Heart left ventricle (tissue), 16 donors: ENCODE measurements at regions of chr22 and their contacts with region 1.

Region 1: DNA sequence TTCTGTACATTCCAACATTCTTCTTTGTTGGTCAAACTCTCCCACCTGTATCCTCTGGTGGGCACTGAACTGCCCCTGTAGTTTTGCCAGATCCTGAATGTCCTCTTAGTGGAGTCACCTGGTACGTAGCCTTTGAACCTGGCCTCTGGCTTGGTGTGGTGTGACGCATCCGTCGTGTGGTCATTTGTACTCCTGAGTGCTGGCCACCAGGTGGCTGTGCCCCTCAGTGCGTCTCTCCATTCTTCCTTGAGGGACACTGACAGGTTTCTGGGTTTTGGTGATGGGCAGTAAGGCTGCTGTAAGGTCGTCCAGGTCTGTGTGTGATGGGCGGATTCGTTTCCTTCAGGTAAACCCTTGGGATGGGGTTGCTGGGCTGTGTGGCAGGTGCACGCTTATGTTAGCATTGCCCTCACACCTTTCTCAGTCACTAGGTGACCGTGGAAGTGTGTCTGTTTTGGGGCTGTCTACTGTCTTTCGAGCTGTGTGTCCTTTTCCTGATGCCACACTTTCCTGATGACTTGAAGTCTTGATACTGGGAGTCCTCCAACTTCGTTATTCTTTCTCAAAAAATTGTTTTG is 13.6 kb upstream of the RANBP1 start:
- DNase-seq: peak in 2 of 5 donors; percentile 4 to 25
- ATAC-seq: no peak
- H3K4me3 ChIP-seq: no peak overlapping the region
- H3K27ac ChIP-seq: no peak overlapping the region
- H3K4me1 ChIP-seq: no peaks in the 10 kb centered on the region
- H3K27me3 ChIP-seq: no peaks in the 10 kb centered on the region
- CTCF ChIP-seq: no peak
- POLR2A ChIP-seq: no peak

Region 2: GRCh38 chr22:19970479-19971275 is 131.6 kb before region 1 on chr22:
- intact Hi-C with region 1: loop called in 1 of 10 experiments (anchors 10 kb)
- DNase-seq: peak; percentile 56 to 89 (median 64)
- ATAC-seq: peak; percentile 62 to 77 (median 70)
- H3K4me3 ChIP-seq: no peak overlapping the region
- H3K27ac ChIP-seq: peak overlapping the region in 3 of 12 donors; percentile 23 to 55 (median 41)
- H3K4me1 ChIP-seq: peaks cover 0 to 32% (median 5%) of the 10 kb centered on the region in 12 donors
- H3K27me3 ChIP-seq: no peaks in the 10 kb centered on the region
- CTCF ChIP-seq: peak; percentile 90 to 100 (median 95)
- POLR2A ChIP-seq: no peak

Region 3: GRCh38 chr22:20044495-20045151 is 57.7 kb before region 1 on chr22:
- intact Hi-C with region 1: no loop called
- DNase-seq: no peak
- ATAC-seq: peak in 3 of 4 donors; percentile 14 to 52 (median 31)
- H3K4me3 ChIP-seq: no peak overlapping the region
- H3K27ac ChIP-seq: no peak overlapping the region
- H3K4me1 ChIP-seq: peaks cover 0 to 13% (median 0%) of the 10 kb centered on the region in 12 donors
- H3K27me3 ChIP-seq: no peaks in the 10 kb centered on the region
- CTCF ChIP-seq: no peak
- POLR2A ChIP-seq: no peak